Activated naive CD4-positive, alpha-beta T cell treated with anti-CD3 and anti-CD28 coated beads for 36 hours (primary cell): ENCODE measurements at regions of chr21 and their contacts with region 1.

Region 1: GRCh38 chr21:33441489-33442477 is 38.0 kb downstream of the TMEM50B start:
- DNase-seq: no peak
- H3K4me3 Mint-ChIP-seq: no peak overlapping the region
- H3K27ac Mint-ChIP-seq: no peak overlapping the region
- H3K4me1 Mint-ChIP-seq: peaks cover 4% of the 10 kb centered on the region
- H3K27me3 Mint-ChIP-seq: no peaks in the 10 kb centered on the region

Region 2: GRCh38 chr21:32834916-32835235 is 606.9 kb before region 1 on chr21:
- CTCF ChIA-PET with region 1: interaction called, 4 read pairs
- intact Hi-C with region 1: loop called (anchors 10 kb)
- DNase-seq: no peak
- H3K4me3 Mint-ChIP-seq: no peak overlapping the region
- H3K27ac Mint-ChIP-seq: no peak overlapping the region
- H3K4me1 Mint-ChIP-seq: no peaks in the 10 kb centered on the region
- H3K27me3 Mint-ChIP-seq: no peaks in the 10 kb centered on the region

Region 3: DNA sequence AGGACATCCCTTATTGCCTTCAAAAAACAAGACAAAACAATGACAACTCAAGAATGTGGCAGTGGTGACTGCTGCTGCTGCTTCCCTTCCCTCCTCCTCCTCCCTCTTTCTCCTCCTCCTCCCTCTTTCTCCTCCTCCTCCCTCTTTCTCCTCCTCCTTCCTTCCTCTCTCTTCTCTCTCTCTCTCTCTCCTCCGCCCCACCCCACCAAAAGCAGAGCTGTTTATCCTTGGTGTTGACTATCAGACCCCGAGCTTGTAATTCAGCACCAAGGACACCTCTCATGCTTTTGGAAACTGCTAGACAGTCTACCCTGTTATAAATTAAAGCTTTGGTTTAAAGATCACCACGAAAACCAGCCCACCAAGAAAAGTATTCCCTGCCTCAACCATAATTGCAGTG is 284.5 kb before region 1 on chr21:
- CTCF ChIA-PET with region 1: no interaction called
- intact Hi-C with region 1: no loop called
- DNase-seq: no peak
- H3K4me3 Mint-ChIP-seq: no peak overlapping the region
- H3K27ac Mint-ChIP-seq: no peak overlapping the region
- H3K4me1 Mint-ChIP-seq: peaks cover under 1% of the 10 kb centered on the region
- H3K27me3 Mint-ChIP-seq: peaks cover 2% of the 10 kb centered on the region

Region 4: DNA sequence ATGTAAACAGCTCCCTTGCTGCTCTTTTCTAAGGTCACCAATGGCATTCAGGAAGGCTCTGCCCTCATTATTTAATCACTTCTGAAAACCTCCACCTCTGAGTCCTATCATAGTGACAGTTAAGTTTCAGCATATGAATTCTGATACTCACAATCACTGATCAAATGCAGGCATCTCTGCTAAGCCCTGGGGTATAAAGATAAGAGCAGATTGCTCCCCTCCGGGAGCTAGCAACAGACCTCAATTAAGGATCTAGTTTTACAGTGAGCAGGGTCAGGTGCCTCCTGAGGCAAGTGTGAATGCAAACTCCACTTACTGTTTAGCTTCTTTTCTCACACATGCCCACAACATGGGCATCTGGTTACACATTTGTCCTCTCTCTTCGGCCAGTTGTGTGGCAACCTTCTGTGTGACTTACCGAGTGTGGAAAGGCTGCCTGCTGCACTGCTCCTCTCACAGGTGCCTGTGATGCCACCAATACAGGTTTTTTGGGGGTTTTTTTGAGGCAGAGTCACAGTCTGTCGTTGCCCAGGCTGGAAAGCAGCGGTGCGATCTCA is 160.6 kb before region 1 on chr21:
- CTCF ChIA-PET with region 1: interaction called, 10 read pairs
- intact Hi-C with region 1: no loop called
- DNase-seq: no peak
- H3K4me3 Mint-ChIP-seq: no peak overlapping the region
- H3K27ac Mint-ChIP-seq: no peak overlapping the region
- H3K4me1 Mint-ChIP-seq: peaks cover 4% of the 10 kb centered on the region
- H3K27me3 Mint-ChIP-seq: no peaks in the 10 kb centered on the region

Region 5: DNA sequence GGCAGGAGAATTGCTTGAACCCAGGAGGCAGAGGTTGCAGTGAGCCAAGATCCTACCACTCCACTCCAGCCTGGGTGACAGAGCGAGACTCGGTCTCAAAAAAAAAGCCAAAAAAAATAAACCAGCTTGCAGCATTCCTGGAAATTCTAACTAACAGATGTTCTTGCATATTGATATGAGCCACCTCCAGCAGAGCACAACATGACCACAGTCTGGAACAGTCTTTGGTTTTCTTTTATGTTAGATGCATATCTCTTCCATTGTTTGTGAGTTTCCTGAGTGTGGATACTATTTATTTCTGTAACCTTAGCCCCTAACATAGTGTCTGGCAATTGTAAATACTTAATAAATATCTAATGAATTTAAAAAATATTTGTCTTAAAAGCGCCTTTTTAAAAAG is 93.1 kb before region 1 on chr21:
- CTCF ChIA-PET with region 1: interaction called, 12 read pairs
- intact Hi-C with region 1: no loop called
- DNase-seq: no peak
- H3K4me3 Mint-ChIP-seq: no peak overlapping the region
- H3K27ac Mint-ChIP-seq: no peak overlapping the region
- H3K4me1 Mint-ChIP-seq: peaks cover 19% of the 10 kb centered on the region
- H3K27me3 Mint-ChIP-seq: no peaks in the 10 kb centered on the region

Region 6: GRCh38 chr21:33374450-33375096 is 67.2 kb before region 1 on chr21:
- CTCF ChIA-PET with region 1: interaction called, 11 read pairs
- intact Hi-C with region 1: no loop called
- DNase-seq: peak; percentile 81
- H3K4me3 Mint-ChIP-seq: no peak overlapping the region
- H3K27ac Mint-ChIP-seq: no peak overlapping the region
- H3K4me1 Mint-ChIP-seq: peaks cover 13% of the 10 kb centered on the region
- H3K27me3 Mint-ChIP-seq: no peaks in the 10 kb centered on the region

Region 7: GRCh38 chr21:34187935-34188334 is 746.2 kb after region 1 on chr21:
- CTCF ChIA-PET with region 1: no interaction called
- intact Hi-C with region 1: no loop called
- DNase-seq: no peak
- H3K4me3 Mint-ChIP-seq: no peak overlapping the region
- H3K27ac Mint-ChIP-seq: no peak overlapping the region
- H3K4me1 Mint-ChIP-seq: peaks cover 16% of the 10 kb centered on the region
- H3K27me3 Mint-ChIP-seq: no peaks in the 10 kb centered on the region